Right cardiac atrium (tissue), 5 donors: ENCODE measurements at regions of chr19 and their contacts with region 1.

Region 1: GRCh38 chr19:2315818-2316353 is 7.9 kb upstream of the LINGO3 start:
- DNase-seq: peak; percentile 69 to 89 (median 89)
- ATAC-seq: peak; percentile 83 to 84
- H3K4me3 ChIP-seq: no peak overlapping the region
- H3K27ac ChIP-seq: no peak overlapping the region
- H3K4me1 ChIP-seq: no peaks in the 10 kb centered on the region
- H3K27me3 ChIP-seq: no peaks in the 10 kb centered on the region

Region 2: GRCh38 chr19:2157452-2157851 is 158.4 kb before region 1 on chr19:
- intact Hi-C with region 1: loop called in 2 of 4 experiments (anchors 2 to 5 kb)
- DNase-seq: no peak
- ATAC-seq: no peak
- H3K4me3 ChIP-seq: no peak overlapping the region
- H3K27ac ChIP-seq: no peak overlapping the region
- H3K4me1 ChIP-seq: no peaks in the 10 kb centered on the region
- H3K27me3 ChIP-seq: no peaks in the 10 kb centered on the region

Region 3: DNA sequence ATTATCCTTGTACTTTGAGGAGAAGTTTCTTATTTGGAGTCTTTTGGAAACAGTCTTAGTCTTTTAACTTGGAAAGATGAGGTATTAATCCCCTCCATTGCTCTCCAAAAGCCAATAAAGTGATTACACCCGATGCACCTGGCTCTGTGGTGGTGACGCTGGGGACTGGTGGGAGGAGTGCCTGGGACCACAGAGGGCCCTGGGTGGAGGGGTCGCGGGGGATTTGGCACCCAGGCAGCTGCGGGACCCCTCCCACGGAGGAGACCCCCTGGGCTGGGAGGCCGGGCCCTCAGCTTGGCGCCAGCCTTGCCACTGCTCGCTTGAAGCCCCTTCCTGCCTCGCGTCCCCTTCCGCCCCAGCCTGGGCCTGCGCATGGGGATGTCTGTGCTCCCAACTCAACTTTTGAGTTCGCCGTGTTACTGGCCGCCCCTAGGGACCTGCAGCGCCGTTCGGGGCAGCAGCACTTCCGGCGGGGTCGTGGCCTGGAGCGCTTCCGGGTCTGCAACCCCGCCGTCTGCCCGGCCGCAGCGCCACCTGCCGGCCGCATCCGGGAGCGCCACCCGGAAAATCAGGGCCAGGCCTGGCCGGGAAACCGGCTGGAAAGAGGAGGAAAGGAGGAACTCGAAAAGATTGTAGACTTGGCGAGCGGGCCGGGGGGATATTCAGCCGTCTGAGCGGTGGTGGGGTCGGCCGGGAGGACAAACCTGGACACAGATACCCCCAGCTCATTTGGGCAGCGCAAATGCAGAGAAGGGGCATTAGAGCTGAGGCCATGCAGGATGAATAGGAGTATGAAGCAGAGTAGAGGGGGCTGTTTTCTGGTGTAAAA is 42.3 kb before region 1 on chr19:
- intact Hi-C with region 1: loop called in 1 of 4 experiments (anchors 5 kb)
- DNase-seq: peak; percentile 80 to 93 (median 92)
- ATAC-seq: peak; percentile 7 to 17
- H3K4me3 ChIP-seq: no peak overlapping the region
- H3K27ac ChIP-seq: peak overlapping the region; percentile 26
- H3K4me1 ChIP-seq: peaks cover 2% of the 10 kb centered on the region
- H3K27me3 ChIP-seq: no peaks in the 10 kb centered on the region

Region 4: DNA sequence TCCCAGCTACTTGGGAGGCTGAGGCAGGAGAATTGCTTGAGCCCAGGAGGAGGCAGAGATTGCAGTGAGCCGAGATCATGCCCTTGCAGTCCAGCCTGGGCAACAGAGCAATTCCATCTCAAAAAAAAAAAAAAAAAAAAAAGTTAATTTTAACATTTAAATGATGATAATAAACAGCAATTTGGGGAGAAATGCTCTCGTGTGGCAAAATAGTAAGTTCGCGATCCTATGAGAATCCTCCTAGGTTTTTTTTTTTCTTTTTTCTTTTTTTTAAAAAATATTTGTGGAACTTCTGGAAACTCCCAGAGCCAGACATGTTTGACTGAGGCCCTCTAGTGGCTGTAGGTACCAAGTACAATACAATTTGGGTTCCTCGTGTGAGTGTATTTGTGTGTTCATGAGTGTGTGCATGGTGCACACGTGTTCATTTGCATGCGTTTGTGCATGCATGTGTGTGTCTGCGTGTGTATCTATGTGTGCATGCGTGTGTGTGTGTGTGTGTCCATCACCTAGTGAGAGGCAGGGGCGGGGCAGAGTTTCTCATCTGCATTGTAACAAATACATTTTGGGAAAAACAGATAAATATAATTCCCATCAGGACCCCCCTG is 75.3 kb after region 1 on chr19:
- intact Hi-C with region 1: no loop called
- DNase-seq: no peak
- ATAC-seq: peak; percentile 68
- H3K4me3 ChIP-seq: no peak overlapping the region
- H3K27ac ChIP-seq: no peak overlapping the region
- H3K4me1 ChIP-seq: no peaks in the 10 kb centered on the region
- H3K27me3 ChIP-seq: no peaks in the 10 kb centered on the region